Activated CD8-positive, alpha-beta T cell treated with anti-CD3 and anti-CD28 coated beads for 36 hours (primary cell): ENCODE measurements at regions of chr7 and their contacts with region 1.

Region 1: DNA sequence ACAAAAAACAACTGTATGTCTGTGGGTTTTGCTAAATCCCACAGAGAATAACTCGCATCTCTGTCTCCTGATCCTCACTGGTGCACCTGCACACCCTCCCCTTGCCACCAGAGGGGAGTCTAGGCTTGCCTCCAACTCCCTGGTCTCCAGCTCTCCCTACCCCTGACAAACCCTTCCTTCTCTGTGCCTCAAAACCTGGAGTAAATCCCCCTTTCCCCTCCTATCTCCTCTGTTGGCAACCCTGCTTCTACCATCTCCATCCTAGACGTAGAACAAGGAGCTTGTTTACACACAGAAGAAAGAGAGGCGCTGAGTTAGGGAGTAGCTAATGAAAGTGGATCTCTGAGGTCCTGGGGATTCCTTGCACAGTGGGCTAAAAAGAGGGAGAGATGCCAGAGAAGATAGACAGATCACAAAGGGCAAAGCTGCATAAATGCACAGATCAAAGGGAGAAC is 6.0 kb downstream of the MBLAC1 start:
- DNase-seq: peak; percentile 78
- ATAC-seq: peak; percentile 82
- H3K4me3 Mint-ChIP-seq: no peak overlapping the region
- H3K27ac Mint-ChIP-seq: no peak overlapping the region
- H3K4me1 Mint-ChIP-seq: peaks cover 10% of the 10 kb centered on the region
- H3K27me3 Mint-ChIP-seq: no peaks in the 10 kb centered on the region
- CTCF ChIP-seq: peak; percentile 97

Region 2: GRCh38 chr7:100051611-100052010 is 81.1 kb before region 1 on chr7:
- CTCF ChIA-PET with region 1: no interaction called
- POLR2A ChIA-PET with region 1: no interaction called
- intact Hi-C with region 1: no loop called
- DNase-seq: no peak
- ATAC-seq: no peak
- H3K4me3 Mint-ChIP-seq: peak overlapping the region; percentile 6
- H3K27ac Mint-ChIP-seq: no peak overlapping the region
- H3K4me1 Mint-ChIP-seq: peaks cover 16% of the 10 kb centered on the region
- H3K27me3 Mint-ChIP-seq: no peaks in the 10 kb centered on the region
- CTCF ChIP-seq: no peak

Region 3: DNA sequence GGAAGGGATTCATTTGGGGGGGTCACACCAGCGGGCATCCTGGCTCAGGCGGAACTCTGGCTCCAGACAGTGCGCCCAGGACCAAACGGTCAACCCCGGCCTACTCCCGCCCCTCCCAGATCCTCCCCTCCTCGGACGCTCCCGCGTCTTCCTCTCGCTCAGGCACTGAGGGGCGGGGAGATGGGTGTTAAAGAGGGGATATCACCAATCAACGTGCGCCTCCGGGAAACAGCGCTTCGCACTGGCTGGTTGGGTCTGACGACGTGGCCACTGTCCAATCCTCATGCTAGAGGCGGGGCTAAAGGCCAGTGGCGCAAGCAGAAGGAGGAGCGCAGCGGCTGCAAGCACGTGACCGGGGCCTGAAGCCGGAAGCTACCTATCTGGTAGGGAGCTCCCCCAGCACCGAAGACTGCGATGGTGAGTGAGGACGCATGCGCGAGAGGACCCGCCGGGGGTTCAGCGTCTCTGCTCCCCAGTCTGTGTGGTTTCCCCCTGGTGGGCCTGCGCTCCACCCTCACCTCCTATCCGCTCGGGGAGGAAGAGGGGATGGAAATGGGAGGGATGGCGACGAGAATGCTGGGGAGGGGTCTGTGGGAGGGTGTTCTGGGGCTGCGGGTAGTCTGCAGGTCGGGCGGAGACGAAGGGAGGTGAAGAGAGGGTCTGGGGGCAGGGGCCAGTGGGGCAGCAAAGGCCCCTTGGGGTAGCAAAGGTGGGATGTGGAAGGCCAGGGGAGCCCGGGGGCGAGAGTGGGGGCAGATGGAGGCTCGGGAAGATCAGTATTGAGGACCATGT is 16.0 kb after region 1 on chr7 and contains the start of gene LAMTOR4:
- CTCF ChIA-PET with region 1: interaction called, 27 read pairs
- POLR2A ChIA-PET with region 1: interaction called, 5 read pairs
- intact Hi-C with region 1: no loop called
- DNase-seq: peak; percentile 99
- ATAC-seq: peak; percentile 98
- H3K4me3 Mint-ChIP-seq: peak within 1 kb of the TSS; percentile 99
- H3K27ac Mint-ChIP-seq: peak within 1 kb of the TSS; percentile 99
- H3K4me1 Mint-ChIP-seq: peaks cover 26% of the 10 kb centered on the region
- H3K27me3 Mint-ChIP-seq: no peaks in the 10 kb centered on the region
- CTCF ChIP-seq: no peak
- total RNA-seq, gene LAMTOR4: 108 to 116 TPM

Region 4: GRCh38 chr7:100177045-100178001 is 44.6 kb after region 1 on chr7 and contains the starts of genes GPC2 and STAG3:
- CTCF ChIA-PET with region 1: interaction called, 11 read pairs
- POLR2A ChIA-PET with region 1: no interaction called
- intact Hi-C with region 1: no loop called
- DNase-seq: peak; percentile 99
- ATAC-seq: peak; percentile 91
- H3K4me3 Mint-ChIP-seq: peak within 1 kb of the TSS; percentile 76
- H3K27ac Mint-ChIP-seq: peak within 1 kb of the TSS; percentile 25
- H3K4me1 Mint-ChIP-seq: peaks cover 32% of the 10 kb centered on the region
- H3K27me3 Mint-ChIP-seq: no peaks in the 10 kb centered on the region
- CTCF ChIP-seq: no peak
- total RNA-seq, gene GPC2: 3.7 to 4.3 TPM
- total RNA-seq, gene STAG3: 13.2 to 15.8 TPM

Region 5: DNA sequence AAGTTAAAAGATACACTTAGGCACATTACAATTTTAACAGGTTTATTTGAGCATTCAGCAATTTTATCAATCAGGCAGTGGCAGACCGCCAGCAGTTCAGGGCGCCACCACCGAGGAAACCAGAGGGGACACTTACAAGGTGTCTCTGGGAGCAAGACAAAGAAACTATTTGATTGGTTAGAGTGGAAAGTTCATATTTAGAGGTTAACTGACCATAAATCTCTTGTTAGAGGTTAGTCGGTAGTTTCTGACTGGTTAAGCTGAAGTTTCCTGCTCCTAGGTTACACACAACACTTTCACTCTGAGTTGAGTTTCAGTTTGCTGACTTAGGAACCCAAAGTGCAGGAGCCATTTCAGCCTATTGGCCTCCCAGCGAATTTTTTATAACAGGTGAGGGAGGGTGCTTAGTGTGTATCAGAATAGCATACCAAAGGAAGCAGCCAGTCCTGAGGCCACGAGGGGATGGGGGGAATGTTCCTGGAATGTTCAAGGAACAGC is 76.2 kb after region 1 on chr7:
- CTCF ChIA-PET with region 1: interaction called, 60 read pairs
- POLR2A ChIA-PET with region 1: interaction called, 3 read pairs
- intact Hi-C with region 1: no loop called
- DNase-seq: peak; percentile 85
- ATAC-seq: peak; percentile 83
- H3K4me3 Mint-ChIP-seq: no peak overlapping the region
- H3K27ac Mint-ChIP-seq: peak overlapping the region; percentile 76
- H3K4me1 Mint-ChIP-seq: peaks cover 46% of the 10 kb centered on the region
- H3K27me3 Mint-ChIP-seq: no peaks in the 10 kb centered on the region
- CTCF ChIP-seq: no peak

Region 6: DNA sequence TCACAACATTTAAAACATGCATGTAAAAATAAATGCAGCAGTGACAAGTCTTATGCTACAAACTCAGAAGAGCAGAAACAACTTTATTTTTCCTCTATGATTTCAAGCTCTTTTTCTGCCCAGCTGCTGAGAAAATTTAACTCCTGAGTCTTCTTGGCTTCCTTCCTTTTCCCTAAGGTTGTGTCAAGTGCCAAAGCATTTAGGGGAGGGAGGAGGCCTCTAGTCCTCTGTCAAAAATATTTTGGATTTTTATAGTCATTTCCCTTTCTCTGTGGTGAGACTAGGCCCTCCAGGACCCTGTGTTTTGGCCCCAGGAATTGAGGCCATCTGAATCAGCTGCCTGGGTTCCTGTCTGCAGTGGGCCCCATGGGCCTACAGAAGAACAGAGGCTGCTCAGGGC is 214.2 kb after region 1 on chr7:
- CTCF ChIA-PET with region 1: interaction called, 20 read pairs
- POLR2A ChIA-PET with region 1: no interaction called
- intact Hi-C with region 1: no loop called
- DNase-seq: no peak
- ATAC-seq: no peak
- H3K4me3 Mint-ChIP-seq: no peak overlapping the region
- H3K27ac Mint-ChIP-seq: peak overlapping the region; percentile 60
- H3K4me1 Mint-ChIP-seq: peaks cover 52% of the 10 kb centered on the region
- H3K27me3 Mint-ChIP-seq: no peaks in the 10 kb centered on the region
- CTCF ChIP-seq: no peak